AG04450 (cell line): ENCODE measurements at regions of chr9 and their contacts with region 1.

Region 1: DNA sequence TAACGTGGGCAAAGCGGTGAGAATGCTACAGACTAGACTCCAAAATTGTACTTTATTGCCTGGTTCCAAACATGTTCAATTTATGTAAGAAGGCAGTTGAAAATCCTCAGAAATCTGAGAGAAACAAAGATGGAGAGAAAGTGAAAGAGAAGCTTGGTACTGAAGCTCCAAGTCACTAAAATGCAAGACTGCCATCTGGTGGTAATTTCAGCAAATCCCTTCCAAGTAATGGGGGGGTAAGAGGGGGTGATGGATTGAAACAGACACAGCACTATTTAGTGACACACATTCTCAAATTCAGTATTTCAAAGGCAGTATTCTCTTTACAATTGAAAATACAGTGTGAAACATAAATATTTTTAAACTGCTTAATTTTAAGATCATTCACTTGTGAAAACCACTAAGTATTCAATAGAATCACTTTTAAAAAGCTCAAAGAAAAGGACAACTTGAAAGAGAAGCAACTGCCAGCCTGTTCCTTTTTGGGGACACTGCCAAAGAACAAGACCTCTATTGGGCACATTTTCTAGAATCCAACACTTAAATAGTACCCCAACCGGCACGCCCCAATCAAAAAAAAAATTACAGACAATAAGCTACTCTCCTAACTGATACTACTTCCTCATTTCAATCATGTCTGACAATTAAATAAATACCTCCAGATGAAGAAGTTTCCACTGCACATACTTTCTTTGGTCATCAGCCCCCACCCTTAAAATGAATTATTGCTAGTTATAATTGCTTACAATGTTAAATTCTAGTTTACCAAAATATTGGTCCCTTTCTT is 131.5 kb downstream of the AGTPBP1 start:
- DNase-seq: peak; percentile 54
- H3K4me3 ChIP-seq: peak overlapping the region; percentile 50
- H3K27ac ChIP-seq: no peak overlapping the region
- H3K27me3 ChIP-seq: no peaks in the 10 kb centered on the region
- CTCF ChIP-seq: peak; percentile 90

Region 2: GRCh38 chr9:84397151-84397728 is 1213.0 kb before region 1 on chr9:
- CTCF ChIA-PET with region 1: interaction called, 141 read pairs
- POLR2A ChIA-PET with region 1: no interaction called
- DNase-seq: peak; percentile 38
- H3K4me3 ChIP-seq: no peak overlapping the region
- H3K27ac ChIP-seq: no peak overlapping the region
- H3K27me3 ChIP-seq: no peaks in the 10 kb centered on the region
- CTCF ChIP-seq: peak; percentile 90

Region 3: DNA sequence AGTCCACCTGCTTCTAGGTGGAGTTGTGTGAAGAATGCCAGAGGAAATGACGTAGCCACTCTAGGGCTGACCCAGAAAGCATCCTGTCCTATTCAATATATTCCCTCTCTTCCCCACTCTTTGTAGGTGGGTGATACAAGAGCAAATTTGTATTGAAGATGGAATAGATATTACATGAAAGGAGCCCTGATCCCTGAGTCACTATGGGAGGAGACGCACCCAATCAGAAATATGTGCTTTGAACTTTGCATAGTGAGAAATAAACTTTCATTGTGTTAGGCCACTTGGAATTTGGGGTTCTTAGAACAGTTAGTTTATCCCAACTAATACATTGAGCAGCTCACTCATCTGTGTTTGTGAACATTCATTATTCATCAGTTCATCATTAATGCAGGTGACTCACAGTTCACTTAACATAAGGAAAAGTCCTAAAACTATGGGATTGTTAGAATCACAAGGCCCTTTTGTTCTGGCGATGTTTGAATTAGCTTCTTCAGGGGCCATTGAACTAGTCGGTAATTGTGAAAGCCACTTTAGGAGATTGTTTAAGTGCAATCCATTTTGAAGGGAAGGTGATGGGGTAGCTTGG is 967.6 kb before region 1 on chr9:
- CTCF ChIA-PET with region 1: interaction called, 17 read pairs
- POLR2A ChIA-PET with region 1: no interaction called
- DNase-seq: no peak
- H3K4me3 ChIP-seq: no peak overlapping the region
- H3K27ac ChIP-seq: no peak overlapping the region
- H3K27me3 ChIP-seq: no peaks in the 10 kb centered on the region
- CTCF ChIP-seq: no peak

Region 4: DNA sequence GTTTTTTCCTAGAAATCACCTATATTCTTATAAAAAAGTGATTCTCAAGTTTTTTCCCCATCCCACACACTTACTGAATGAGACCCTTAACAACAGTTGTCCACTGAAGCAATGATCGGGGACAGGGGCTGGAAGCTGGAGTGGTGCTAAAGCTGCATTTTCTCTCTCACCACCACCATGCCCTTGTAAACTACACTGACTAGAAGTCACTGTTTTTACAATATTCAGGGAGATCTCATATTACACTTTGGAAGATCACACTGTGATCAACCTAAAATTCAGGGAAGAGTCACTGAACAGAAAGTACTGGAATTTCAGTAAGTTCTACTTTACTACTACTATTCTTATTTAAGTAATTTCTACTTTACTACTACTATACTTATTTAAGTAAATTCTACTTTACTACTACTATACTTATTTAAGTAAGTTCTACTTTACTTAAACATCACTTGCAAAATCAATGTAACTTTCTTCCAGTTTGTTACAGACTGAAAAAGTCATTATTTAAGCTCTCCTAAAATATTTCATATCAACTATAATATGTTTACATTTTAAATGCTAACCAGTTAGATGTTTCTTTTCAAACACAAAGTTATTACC is 32.8 kb before region 1 on chr9:
- CTCF ChIA-PET with region 1: interaction called, 10 read pairs
- POLR2A ChIA-PET with region 1: no interaction called
- DNase-seq: no peak
- H3K4me3 ChIP-seq: no peak overlapping the region
- H3K27ac ChIP-seq: no peak overlapping the region
- H3K27me3 ChIP-seq: no peaks in the 10 kb centered on the region
- CTCF ChIP-seq: no peak

Region 5: GRCh38 chr9:85586684-85587083 is 23.6 kb before region 1 on chr9:
- CTCF ChIA-PET with region 1: interaction called, 15 read pairs
- POLR2A ChIA-PET with region 1: no interaction called
- DNase-seq: no peak
- H3K4me3 ChIP-seq: no peak overlapping the region
- H3K27ac ChIP-seq: no peak overlapping the region
- H3K27me3 ChIP-seq: no peaks in the 10 kb centered on the region
- CTCF ChIP-seq: no peak

Region 6: DNA sequence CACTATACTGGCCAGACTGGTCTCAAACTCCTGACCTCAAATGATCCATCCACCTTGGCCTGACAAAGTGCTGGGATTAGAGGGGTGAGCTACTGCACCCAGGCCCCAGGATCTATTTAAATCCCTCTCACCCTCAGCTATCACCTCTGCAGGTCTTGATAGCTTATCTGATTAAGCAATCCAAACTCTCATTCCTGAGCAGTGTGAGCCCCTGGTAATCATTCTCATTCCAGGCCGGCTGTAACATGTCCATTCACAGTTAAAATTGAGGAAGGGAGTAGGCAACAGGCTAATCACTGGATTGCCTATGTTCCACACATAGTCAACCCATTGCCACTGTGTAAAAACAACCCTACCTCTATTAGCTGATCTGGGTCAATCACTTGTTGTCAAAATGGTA is 20.4 kb after region 1 on chr9:
- CTCF ChIA-PET with region 1: interaction called, 19 read pairs
- POLR2A ChIA-PET with region 1: no interaction called
- DNase-seq: no peak
- H3K4me3 ChIP-seq: no peak overlapping the region
- H3K27ac ChIP-seq: no peak overlapping the region
- H3K27me3 ChIP-seq: no peaks in the 10 kb centered on the region
- CTCF ChIP-seq: no peak

Region 7: GRCh38 chr9:85647571-85647970 is 37.3 kb after region 1 on chr9:
- CTCF ChIA-PET with region 1: interaction called, 11 read pairs
- POLR2A ChIA-PET with region 1: no interaction called
- DNase-seq: no peak
- H3K4me3 ChIP-seq: no peak overlapping the region
- H3K27ac ChIP-seq: no peak overlapping the region
- H3K27me3 ChIP-seq: no peaks in the 10 kb centered on the region
- CTCF ChIP-seq: no peak

Region 8: DNA sequence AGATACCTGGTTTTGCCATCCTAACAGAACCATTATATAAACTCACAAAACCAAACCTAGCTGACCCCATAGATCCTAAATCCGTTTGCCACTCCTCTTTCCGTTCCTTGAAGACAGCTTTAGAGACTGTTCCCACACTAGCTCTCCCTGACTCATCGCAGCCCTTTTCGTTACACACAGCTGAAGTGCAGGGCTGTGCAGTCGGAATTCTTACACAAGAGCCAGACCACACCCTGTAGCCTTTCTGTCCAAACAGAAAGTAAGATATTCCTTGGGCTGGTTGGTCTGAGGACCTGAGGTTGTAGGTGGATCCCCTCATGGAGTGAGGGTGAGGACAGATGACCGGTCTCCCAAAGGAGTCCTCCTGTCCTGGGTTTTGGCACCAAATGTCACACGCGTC is 274.0 kb after region 1 on chr9:
- CTCF ChIA-PET with region 1: no interaction called
- POLR2A ChIA-PET with region 1: no interaction called
- DNase-seq: no peak
- H3K4me3 ChIP-seq: no peak overlapping the region
- H3K27ac ChIP-seq: no peak overlapping the region
- H3K27me3 ChIP-seq: peaks cover 3% of the 10 kb centered on the region
- CTCF ChIP-seq: no peak